GM12878 (cell line): ENCODE measurements at regions of chr10 and their contacts with region 1.

Region 1: GRCh38 chr10:80504158-80504811 is 33.4 kb upstream of the SH2D4B start:
- DNase-seq: no peak
- ATAC-seq: no peak
- H3K4me3 ChIP-seq: no peak overlapping the region
- H3K27ac ChIP-seq: no peak overlapping the region
- H3K4me1 ChIP-seq: peaks cover 31% of the 10 kb centered on the region
- H3K27me3 ChIP-seq: no peaks in the 10 kb centered on the region
- CTCF ChIP-seq: no peak
- EP300 ChIP-seq: no peak
- POLR2A ChIP-seq: no peak
- RAD21 ChIP-seq: no peak

Region 2: GRCh38 chr10:80421707-80422536 is 82.4 kb before region 1 on chr10:
- CTCF ChIA-PET with region 1: interaction called, 33 read pairs
- POLR2A ChIA-PET with region 1: interaction called, 7 read pairs
- RAD21 ChIA-PET with region 1: interaction called, 17 read pairs
- SMC1A ChIA-PET with region 1: interaction called, 14 read pairs
- in situ Hi-C with region 1: no loop called
- intact Hi-C with region 1: no loop called
- DNase-seq: peak; percentile 40
- ATAC-seq: peak; percentile 92
- H3K4me3 ChIP-seq: peak overlapping the region; percentile 23; the same call in 1 of the 2 replicates
- H3K27ac ChIP-seq: peak overlapping the region; percentile 47
- H3K4me1 ChIP-seq: peaks cover 21% of the 10 kb centered on the region
- H3K27me3 ChIP-seq: no peaks in the 10 kb centered on the region
- CTCF ChIP-seq: no peak
- EP300 ChIP-seq: no peak
- POLR2A ChIP-seq: no peak
- RAD21 ChIP-seq: no peak

Region 3: GRCh38 chr10:80516506-80517075 is 12.3 kb after region 1 on chr10:
- CTCF ChIA-PET with region 1: interaction called, 20 read pairs
- POLR2A ChIA-PET with region 1: interaction called, 4 read pairs
- RAD21 ChIA-PET with region 1: interaction called, 4 read pairs
- SMC1A ChIA-PET with region 1: interaction called, 3 read pairs
- in situ Hi-C with region 1: no loop called
- intact Hi-C with region 1: no loop called
- DNase-seq: no peak
- ATAC-seq: no peak
- H3K4me3 ChIP-seq: no peak overlapping the region
- H3K27ac ChIP-seq: no peak overlapping the region
- H3K4me1 ChIP-seq: peaks cover 6% of the 10 kb centered on the region; the same call in 1 of the 2 replicates
- H3K27me3 ChIP-seq: no peaks in the 10 kb centered on the region
- CTCF ChIP-seq: no peak
- EP300 ChIP-seq: no peak
- POLR2A ChIP-seq: peak; percentile 36; the same call in 1 of the 2 replicates
- RAD21 ChIP-seq: no peak

Region 4: GRCh38 chr10:80583685-80584084 is 79.4 kb after region 1 on chr10:
- CTCF ChIA-PET with region 1: interaction called, 8 read pairs
- POLR2A ChIA-PET with region 1: no interaction called
- RAD21 ChIA-PET with region 1: interaction called, 10 read pairs
- SMC1A ChIA-PET with region 1: no interaction called
- in situ Hi-C with region 1: no loop called
- intact Hi-C with region 1: no loop called
- DNase-seq: no peak
- ATAC-seq: peak; percentile 44; the same call in 1 of the 3 replicates
- H3K4me3 ChIP-seq: no peak overlapping the region
- H3K27ac ChIP-seq: no peak overlapping the region
- H3K4me1 ChIP-seq: peaks cover 2% of the 10 kb centered on the region; the same call in 1 of the 2 replicates
- H3K27me3 ChIP-seq: no peaks in the 10 kb centered on the region
- CTCF ChIP-seq: peak in 1 of 3 experiments; percentile 24; a peak in 1 of 6 replicates
- EP300 ChIP-seq: no peak
- POLR2A ChIP-seq: no peak
- RAD21 ChIP-seq: peak; percentile 35; the same call in 1 of the 2 replicates

Region 5: DNA sequence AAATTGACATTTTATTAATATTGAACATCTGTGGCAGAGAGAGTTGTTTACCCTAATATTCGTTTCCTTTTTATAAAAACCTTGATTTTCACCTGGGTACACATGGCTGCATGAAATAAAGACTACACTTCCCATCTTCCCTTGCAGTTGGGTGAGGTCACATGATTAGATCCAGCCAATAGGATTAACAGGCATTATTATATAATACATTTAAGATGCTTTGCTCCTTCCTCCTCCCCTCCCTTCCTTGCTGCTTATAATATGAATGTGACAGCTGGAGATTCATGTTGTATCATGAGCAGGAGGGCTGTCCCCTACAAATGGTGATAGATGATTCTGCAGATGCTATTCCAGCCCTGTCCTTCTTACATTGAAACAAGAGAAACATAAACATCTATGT is 180.0 kb after region 1 on chr10:
- CTCF ChIA-PET with region 1: no interaction called
- POLR2A ChIA-PET with region 1: no interaction called
- RAD21 ChIA-PET with region 1: no interaction called
- SMC1A ChIA-PET with region 1: no interaction called
- in situ Hi-C with region 1: no loop called
- intact Hi-C with region 1: no loop called
- DNase-seq: no peak
- ATAC-seq: peak; percentile 82
- H3K4me3 ChIP-seq: no peak overlapping the region
- H3K27ac ChIP-seq: no peak overlapping the region
- H3K4me1 ChIP-seq: no peaks in the 10 kb centered on the region
- H3K27me3 ChIP-seq: no peaks in the 10 kb centered on the region
- CTCF ChIP-seq: no peak
- EP300 ChIP-seq: no peak
- POLR2A ChIP-seq: no peak
- RAD21 ChIP-seq: no peak